PC-9 (cell line): ENCODE measurements at regions of chr4 and their contacts with region 1.

Region 1: DNA sequence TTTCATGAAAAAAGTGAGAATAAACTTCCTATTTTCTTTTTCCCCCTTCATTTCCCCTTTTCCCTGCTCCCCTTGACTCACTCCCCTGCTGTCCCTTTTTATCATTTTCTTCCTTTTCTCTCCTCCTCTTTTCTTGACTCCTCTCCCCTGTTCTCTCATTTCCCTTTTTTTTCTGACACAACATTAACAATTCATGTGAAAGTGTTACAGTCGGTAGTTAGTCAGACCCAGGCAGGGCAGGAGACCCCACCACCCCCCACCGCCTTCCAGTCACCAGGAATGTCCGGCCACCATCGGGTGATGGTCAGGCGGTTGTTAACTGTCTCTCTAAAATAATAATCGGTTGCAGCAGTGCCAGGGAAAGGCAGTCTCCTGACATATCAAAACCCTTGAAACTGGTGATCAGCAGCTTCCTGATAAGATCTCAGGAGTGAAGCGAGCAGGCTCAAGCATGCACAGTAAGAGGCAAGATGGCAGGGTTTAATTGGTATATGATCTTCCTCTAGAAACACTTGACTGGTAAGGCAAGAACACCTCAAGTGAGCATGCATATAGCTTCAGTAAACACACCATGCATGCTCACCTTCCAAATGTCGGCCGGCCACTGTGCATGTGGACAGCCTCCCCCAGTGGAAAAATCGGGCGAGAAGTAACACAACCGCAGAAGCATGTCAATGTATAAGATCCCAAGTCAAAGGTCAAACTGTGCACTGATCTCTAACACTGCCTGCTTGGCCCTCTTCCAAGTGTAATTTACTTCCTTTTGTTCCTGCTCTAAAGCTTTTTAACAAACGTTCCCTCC is 191.4 kb downstream of the NDST4 start:
- DNase-seq: no peak
- H3K4me3 ChIP-seq: no peak overlapping the region
- H3K27ac ChIP-seq: no peak overlapping the region
- H3K4me1 ChIP-seq: no peaks in the 10 kb centered on the region
- H3K27me3 ChIP-seq: no peaks in the 10 kb centered on the region
- CTCF ChIP-seq: no peak

Region 2: DNA sequence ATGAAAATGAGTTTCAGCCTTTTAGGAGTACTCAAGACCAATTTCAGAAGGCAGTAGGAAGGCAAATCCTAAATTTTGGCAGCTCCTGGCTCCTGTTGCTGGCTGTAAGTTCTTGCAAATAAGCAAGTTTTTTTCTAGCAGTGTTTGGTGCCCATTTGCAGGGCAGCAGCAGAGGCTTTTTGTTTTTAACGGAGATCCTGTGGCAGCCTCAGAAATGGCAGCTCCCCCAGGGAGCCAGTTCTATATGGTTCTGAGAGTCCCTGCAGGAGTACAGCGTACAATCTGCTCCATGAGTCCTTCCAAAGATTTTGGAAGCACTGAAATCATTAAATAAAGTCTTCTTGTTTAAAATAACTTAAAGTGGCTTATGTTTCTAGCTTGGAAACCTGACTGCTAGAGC is 19.5 kb after region 1 on chr4:
- CTCF ChIA-PET with region 1: no interaction called
- POLR2A ChIA-PET with region 1: interaction called, 12 read pairs
- intact Hi-C with region 1: no loop called
- DNase-seq: no peak
- H3K4me3 ChIP-seq: no peak overlapping the region
- H3K27ac ChIP-seq: no peak overlapping the region
- H3K4me1 ChIP-seq: no peaks in the 10 kb centered on the region
- H3K27me3 ChIP-seq: no peaks in the 10 kb centered on the region
- CTCF ChIP-seq: no peak